ENCODE measurements at regions of chr19 and their contacts with region 1.

Region 1: DNA sequence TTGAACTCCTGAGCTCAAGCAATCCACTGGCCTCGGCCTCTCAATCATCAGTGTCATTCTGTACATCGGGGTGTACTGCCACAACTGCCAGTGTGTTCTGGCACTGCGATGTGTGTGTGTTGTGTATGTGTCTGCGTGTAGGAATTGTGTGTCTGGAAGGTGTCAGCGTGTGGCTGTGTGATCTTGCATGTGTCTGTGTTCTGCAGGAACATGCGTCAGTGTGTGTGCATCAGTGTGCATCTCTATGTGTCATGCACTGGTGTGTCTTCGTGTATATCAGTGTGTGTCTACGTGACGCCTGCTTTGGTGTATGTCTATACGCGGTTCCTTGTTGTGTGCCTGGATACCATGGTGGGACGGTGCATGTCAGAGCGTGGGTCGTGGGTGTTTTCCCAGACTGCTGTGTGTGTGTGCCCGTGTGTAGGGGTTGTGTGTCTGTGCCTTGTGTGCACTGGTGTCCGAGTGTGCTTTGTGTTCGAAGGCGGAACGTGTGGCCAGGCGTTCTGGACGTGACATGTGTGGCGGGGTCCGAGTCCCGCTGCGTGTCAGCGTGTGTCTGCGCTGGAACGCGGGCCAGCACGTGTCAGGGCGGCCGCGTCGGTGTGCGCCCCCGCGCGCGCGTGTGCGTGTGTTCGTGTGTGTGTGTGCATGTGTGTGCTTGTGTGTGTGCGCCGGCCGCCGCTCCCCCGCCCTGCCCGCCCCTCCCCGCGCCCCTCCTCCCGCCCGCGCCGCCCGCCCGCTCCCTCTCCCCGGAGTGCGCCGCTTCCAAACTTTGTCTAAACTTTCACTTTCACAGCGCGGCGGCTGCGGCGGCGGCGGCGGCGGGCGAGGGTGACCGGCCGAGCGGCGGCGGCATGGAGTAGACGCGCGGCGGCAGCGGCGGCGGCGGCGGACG is at the start of gene NFIX:
- DNase-seq: peak; percentile 66 to 86
- H3K4me3 ChIP-seq: peak within 1 kb of the TSS; percentile 74 to 85
- H3K27ac ChIP-seq: peak within 1 kb of the TSS; percentile 88 to 99
- H3K4me1 ChIP-seq: peaks cover 0 to 41% (median 36%) of the 10 kb centered on the region in 4 donors
- H3K27me3 ChIP-seq: no peaks in the 10 kb centered on the region
- CTCF ChIP-seq: no peak

Region 2: GRCh38 chr19:13036366-13036976 is 41.5 kb after region 1 on chr19:
- intact Hi-C with region 1: loop called (anchors 5 kb)
- DNase-seq: peak in 1 of 2 donors; percentile 92
- H3K4me3 ChIP-seq: no peak overlapping the region
- H3K27ac ChIP-seq: peak overlapping the region; percentile 88 to 99
- H3K4me1 ChIP-seq: peaks cover 4 to 100% (median 99%) of the 10 kb centered on the region in 4 donors
- H3K27me3 ChIP-seq: no peaks in the 10 kb centered on the region
- CTCF ChIP-seq: no peak

Region 3: DNA sequence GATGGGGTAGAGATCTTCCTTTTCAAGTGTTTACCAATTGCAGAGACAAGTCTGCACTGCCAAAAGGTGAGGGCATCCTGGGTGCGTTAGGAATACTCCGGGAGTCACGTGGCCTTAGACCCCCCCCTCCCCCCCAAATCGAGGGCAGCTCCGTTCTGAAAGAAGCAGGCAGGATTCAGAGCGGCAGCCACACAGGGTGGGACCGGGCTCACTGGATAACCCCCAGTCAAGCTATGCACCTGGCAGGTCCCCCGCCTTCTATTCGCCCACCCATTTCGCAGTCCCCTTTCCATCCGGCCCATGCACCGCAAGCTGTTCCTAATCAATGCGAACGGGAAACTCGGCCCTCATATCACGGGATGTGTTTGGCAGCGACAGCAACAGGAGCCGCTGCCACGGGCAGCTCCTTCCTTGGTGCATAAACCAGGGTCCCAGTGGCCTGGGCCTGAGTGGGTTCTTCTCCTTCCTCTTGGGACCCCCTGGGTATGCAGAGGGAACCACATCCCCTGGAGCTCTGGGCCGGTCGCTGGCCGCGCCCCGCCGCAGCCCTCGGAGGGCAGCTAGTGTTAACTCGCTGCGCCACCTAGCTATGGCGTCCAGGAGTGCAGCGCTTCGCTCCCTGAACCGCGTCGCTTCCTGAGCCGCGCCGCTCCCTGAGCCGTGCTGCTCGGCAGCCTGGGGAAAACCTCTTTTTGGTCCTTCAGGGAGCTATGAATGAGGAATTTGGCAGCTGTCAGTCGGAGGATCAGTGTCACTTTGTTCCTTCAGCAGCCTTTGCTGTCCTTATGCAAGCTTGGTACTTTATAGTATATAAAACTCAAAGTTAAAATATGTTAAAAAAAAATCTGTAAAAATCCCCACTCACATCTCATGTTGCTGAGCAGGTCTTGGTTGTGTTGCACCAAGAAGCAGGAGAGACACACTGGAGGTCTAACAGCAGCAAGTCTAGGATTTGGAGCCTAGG is 66.3 kb after region 1 on chr19:
- intact Hi-C with region 1: loop called (anchors 5 kb)
- DNase-seq: peak; percentile 84 to 92
- H3K4me3 ChIP-seq: peak overlapping the region; percentile 41 to 51
- H3K27ac ChIP-seq: peak overlapping the region; percentile 92 to 99
- H3K4me1 ChIP-seq: peaks cover 30 to 100% (median 97%) of the 10 kb centered on the region in 4 donors
- H3K27me3 ChIP-seq: no peaks in the 10 kb centered on the region
- CTCF ChIP-seq: peak; percentile 95

Region 4: GRCh38 chr19:13082192-13083007 is 87.5 kb after region 1 on chr19:
- intact Hi-C with region 1: loop called (anchors 5 kb)
- DNase-seq: peak in 1 of 2 donors; percentile 73
- H3K4me3 ChIP-seq: no peak overlapping the region
- H3K27ac ChIP-seq: peak overlapping the region; percentile 83 to 94
- H3K4me1 ChIP-seq: peaks cover 11 to 88% (median 63%) of the 10 kb centered on the region in 4 donors
- H3K27me3 ChIP-seq: no peaks in the 10 kb centered on the region
- CTCF ChIP-seq: peak; percentile 29 to 49